Endothelial cell of umbilical vein (primary cell): ENCODE measurements at regions of chr6 and their contacts with region 1.

Region 1: GRCh38 chr6:38021571-38021970 is 202.0 kb downstream of the ZFAND3 start:
- DNase-seq: no peak
- H3K4me3 ChIP-seq: no peak overlapping the region
- H3K27ac ChIP-seq: no peak overlapping the region
- H3K4me1 ChIP-seq: no peaks in the 10 kb centered on the region
- H3K27me3 ChIP-seq: no peaks in the 10 kb centered on the region
- CTCF ChIP-seq: no peak
- POLR2A ChIP-seq: no peak

Region 2: DNA sequence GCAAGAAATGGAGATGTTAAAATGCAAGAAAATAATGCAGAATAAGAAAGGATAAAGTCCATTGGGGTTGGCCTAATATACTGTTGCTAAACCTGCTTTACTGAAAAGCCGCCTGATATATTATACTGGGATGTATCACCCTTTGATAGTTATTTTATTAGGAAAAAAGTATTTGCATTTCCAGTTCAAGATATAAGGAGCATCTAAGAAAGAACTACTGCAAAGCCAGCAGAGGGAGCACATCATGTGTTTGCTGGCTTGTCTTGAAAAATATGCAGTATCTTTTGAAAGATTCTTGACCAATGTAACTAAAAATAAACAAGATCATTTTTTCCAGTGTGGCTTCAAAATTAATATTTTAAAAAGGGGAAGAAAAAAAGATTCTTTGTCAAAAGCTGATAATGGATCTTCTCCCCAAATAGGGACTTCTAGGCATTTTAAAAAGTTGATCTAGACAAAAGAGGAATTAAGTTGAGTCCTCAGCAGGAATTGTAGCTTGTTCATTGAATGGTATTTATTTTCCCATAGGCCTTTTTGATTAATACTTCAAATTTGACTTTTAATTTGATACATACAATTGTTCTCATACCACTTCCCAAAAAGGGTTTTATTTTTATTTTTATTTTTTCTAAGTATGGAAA is 12.8 kb after region 1 on chr6:
- CTCF ChIA-PET with region 1: interaction called, 26 read pairs
- POLR2A ChIA-PET with region 1: no interaction called
- dilution Hi-C with region 1: no loop called
- intact Hi-C with region 1: no loop called
- DNase-seq: peak; percentile 49
- H3K4me3 ChIP-seq: no peak overlapping the region
- H3K27ac ChIP-seq: no peak overlapping the region
- H3K4me1 ChIP-seq: no peaks in the 10 kb centered on the region
- H3K27me3 ChIP-seq: no peaks in the 10 kb centered on the region
- CTCF ChIP-seq: peak; percentile 15 to 52
- POLR2A ChIP-seq: no peak